ENCODE measurements at regions of chr19 and their contacts with region 1.

Region 1: DNA sequence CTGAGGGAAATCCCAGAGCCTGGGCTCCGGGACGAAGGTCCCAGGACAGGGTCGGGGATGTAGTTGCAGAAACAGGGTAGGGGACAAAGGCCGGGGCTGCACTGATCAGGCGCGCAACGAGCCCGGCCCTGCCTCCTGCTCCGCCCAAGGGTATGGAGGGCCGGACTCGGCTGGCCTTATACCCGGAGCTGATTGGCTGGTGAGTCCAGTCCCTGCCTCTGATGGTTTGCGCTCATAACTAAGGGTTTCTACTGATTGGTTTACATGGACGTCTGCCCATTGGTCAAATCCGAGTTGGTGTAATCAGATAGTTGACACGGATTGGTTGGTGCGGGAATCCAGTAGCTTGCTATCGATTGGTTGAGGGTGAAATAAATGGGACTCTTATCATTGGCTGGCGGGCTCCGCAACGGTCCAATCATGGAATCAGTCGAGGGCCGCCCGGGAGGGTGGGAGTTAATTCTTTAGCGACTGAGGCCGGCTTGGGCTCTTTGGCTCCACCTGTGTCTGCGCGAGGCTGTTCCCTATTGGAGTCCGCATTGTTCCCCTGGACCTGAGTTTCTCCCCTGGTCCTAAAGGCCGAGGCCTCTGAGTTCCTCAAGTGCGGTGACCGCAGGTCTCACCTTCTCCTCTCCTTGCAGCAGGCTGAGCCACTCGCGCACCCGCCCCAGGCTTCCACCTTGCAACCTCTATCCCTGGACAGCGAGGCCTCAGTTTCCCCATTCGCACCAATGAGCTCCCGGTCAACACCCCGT is 570 bp upstream of the MPND start:
- DNase-seq: peak; percentile 92
- H3K4me3 ChIP-seq: peak overlapping the region; percentile 63 to 69
- H3K27ac ChIP-seq: peak overlapping the region; percentile 72 to 91
- H3K4me1 ChIP-seq: peaks cover 0 to 11% of the 10 kb centered on the region in 2 experiments; a peak in 1 of 4 replicates
- H3K27me3 ChIP-seq: no peaks in the 10 kb centered on the region
- CTCF ChIP-seq: peak; percentile 35; the same call in 1 of the 2 replicates
- EP300 ChIP-seq: no peak
- RAD21 ChIP-seq: peak; percentile 21; the same call in 1 of the 2 replicates

Region 2: DNA sequence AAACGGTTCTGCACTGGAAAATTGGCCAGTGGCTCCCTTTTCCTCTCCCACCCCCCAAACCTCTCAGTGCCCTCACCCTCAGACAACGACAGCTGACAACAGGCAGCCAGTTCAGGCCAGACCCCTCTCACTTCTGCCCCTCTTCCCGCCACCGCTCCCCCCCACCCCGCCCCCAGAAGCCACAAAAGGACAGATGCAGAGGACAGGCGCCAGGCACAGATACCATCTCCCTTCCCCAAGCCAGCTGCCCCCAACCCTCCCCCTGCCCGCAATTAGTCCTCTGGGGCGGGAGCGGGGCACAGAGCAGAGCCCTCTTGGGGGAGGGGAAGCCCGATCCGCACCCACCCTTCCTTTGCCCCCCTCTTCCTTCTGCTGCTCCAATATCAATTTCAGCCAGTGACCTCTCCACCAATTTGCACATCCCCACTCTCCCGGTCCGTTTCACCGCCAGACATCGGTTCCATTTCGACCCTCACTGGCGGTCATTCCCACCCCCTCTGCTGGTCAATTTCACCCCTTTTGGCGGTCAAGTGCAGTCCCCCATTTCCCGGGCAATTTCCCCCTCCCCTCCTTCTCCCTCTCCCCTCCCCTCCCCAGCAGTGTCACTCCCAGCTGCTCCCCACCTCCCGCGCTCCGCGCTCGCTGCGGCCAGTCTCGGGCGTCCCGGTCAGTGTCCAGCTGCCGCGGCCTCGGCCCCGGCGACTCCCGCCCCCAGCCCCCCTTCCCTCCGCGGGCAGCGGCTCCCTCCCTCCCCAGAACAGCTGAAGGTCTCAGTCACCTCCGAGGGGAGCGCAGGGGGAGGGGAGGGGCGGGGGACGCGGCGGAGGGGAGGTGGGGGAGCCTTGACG is 64.1 kb before region 1 on chr19 and contains the start of gene SHD:
- CTCF ChIA-PET with region 1: interaction called, 15 read pairs
- POLR2A ChIA-PET with region 1: interaction called, 32 read pairs
- DNase-seq: peak; percentile 92
- H3K4me3 ChIP-seq: peak within 1 kb of the TSS; percentile 49 to 50; a peak in 3 of 4 replicates
- H3K27ac ChIP-seq: peak within 1 kb of the TSS; percentile 50 to 99; a peak in 3 of 4 replicates
- H3K4me1 ChIP-seq: peaks cover 0 to 12% of the 10 kb centered on the region in 2 experiments; a peak in 1 of 4 replicates
- H3K27me3 ChIP-seq: peaks cover 12% of the 10 kb centered on the region
- CTCF ChIP-seq: no peak
- EP300 ChIP-seq: peak in 1 of 2 experiments; percentile 87; a peak in 1 of 4 replicates
- RAD21 ChIP-seq: no peak
- polyA plus RNA-seq, gene SHD: 3.1 and 6.9 TPM in 2 replicates

Region 3: GRCh38 chr19:4304530-4305252 is 38.1 kb before region 1 on chr19 and contains the start of gene FSD1:
- CTCF ChIA-PET with region 1: interaction called, 3 read pairs
- POLR2A ChIA-PET with region 1: interaction called, 13 read pairs
- DNase-seq: peak; percentile 99
- H3K4me3 ChIP-seq: peak within 1 kb of the TSS; percentile 43 to 51; a peak in 3 of 4 replicates
- H3K27ac ChIP-seq: no peak within 1 kb of the TSS; a peak in 1 of 4 replicates
- H3K4me1 ChIP-seq: peaks cover 0 to 16% of the 10 kb centered on the region in 2 experiments; a peak in 1 of 4 replicates
- H3K27me3 ChIP-seq: no peaks in the 10 kb centered on the region
- CTCF ChIP-seq: no peak
- EP300 ChIP-seq: no peak
- RAD21 ChIP-seq: no peak
- polyA plus RNA-seq, gene FSD1: 46.7 and 49.0 TPM in 2 replicates

Region 4: DNA sequence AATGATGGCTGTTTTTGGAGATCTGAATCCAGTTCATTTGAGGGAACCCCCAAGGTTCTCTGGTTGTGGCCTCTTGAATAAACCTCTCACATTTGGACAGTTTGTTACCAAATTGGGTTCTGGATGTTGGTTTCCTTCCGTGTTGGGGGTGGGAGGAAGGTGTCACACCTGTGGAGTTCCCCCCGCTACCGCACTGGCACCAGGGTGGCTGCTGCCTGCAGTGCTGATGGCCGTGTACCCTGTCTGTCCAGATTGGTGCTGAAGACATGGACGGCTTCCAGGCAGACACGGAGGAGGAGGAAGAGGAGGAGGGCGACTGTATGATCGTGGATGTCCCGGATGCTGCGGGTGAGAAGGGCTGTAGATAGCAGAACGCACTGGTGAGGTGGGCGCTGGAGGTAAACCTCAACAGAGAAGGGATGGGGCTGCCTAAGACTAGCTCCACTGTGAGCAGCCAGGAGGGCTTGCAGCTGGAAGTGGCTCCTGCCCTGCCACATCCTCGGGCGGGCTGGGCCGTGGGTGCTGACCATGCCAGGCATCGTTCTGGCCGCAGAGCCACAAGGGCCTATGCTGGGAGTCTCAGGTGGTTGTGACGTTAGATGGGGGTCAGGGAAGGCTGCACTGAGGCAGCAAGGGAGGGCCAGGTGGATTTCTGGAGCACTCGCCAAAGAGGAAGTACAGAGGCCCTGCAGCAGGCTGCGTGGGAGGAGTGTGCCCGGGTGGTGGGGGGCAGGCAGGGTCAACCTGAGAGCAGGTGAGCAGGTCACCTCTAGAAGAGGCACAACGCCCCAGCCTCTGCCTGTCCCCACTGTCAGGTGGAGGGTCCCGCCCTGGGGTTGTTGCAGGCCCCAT is 99.4 kb after region 1 on chr19:
- CTCF ChIA-PET with region 1: no interaction called
- POLR2A ChIA-PET with region 1: no interaction called
- DNase-seq: no peak
- H3K4me3 ChIP-seq: no peak overlapping the region
- H3K27ac ChIP-seq: no peak overlapping the region
- H3K4me1 ChIP-seq: no peaks in the 10 kb centered on the region
- H3K27me3 ChIP-seq: no peaks in the 10 kb centered on the region
- CTCF ChIP-seq: no peak
- EP300 ChIP-seq: no peak
- RAD21 ChIP-seq: no peak

Region 5: DNA sequence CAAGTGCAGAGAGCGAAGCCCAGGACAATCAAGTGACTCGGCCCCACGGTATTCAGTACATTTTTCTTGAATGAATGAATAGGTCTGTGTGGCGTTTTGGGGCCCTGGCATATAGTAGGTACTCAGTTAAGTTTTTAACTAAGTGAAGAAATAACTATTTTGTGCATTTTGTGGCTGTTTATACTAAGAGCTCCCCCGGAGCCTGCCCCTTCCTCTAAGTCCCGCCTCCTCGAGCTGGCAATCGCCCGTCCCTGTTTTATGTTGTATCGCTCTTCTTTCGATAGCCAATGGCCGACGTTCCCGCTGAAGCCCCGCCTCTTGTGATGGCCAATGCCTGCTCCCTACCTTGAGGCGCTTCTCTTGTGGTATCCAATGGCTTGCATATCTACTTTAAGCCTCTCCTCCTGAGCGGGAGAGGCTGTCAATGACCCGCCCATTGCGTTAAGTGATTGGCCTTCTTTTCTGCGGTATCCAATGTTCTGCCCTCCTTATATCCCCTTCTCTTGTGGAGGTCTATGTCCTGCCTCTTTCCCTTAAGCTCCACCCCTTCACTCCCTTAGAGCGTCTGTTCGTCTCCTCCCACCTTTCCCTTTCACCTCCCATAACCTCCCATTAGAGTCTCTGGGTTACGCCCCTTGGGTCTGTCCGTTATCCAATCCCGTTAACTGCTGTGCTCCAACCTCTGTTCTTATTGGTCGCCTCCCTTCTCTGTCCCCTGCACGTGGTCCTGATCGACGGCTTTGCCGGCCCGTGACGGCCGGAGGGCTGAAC is 128.8 kb after region 1 on chr19:
- CTCF ChIA-PET with region 1: no interaction called
- POLR2A ChIA-PET with region 1: no interaction called
- DNase-seq: peak; percentile 97
- H3K4me3 ChIP-seq: peak overlapping the region; percentile 60 to 66
- H3K27ac ChIP-seq: peak overlapping the region; percentile 82 to 90
- H3K4me1 ChIP-seq: peaks cover 3 to 21% of the 10 kb centered on the region in 2 experiments; a peak in 1 of 4 replicates
- H3K27me3 ChIP-seq: no peaks in the 10 kb centered on the region
- CTCF ChIP-seq: no peak
- EP300 ChIP-seq: no peak
- RAD21 ChIP-seq: no peak